K562 (cell line): ENCODE measurements at regions of chr13 and their contacts with region 1.

Region 1: GRCh38 chr13:45385907-45386553 is 32.1 kb downstream of the SLC25A30 start:
- DNase-seq: peak in 1 of 4 experiments; percentile 50
- ATAC-seq: peak; percentile 87
- H3K4me3 ChIP-seq: no peak overlapping the region
- H3K27ac ChIP-seq: peak overlapping the region; percentile 76; the same call in 2 of the 3 replicates
- H3K4me1 ChIP-seq: peaks cover 0 to 4% of the 10 kb centered on the region in 2 experiments; a peak in 2 of 5 replicates
- H3K27me3 ChIP-seq: no peaks in the 10 kb centered on the region
- CTCF ChIP-seq: no peak
- EP300 ChIP-seq: no peak
- POLR2A ChIP-seq: no peak
- RAD21 ChIP-seq: no peak

Region 2: GRCh38 chr13:45292176-45292575 is 93.9 kb before region 1 on chr13:
- CTCF ChIA-PET with region 1: no interaction called
- POLR2A ChIA-PET with region 1: no interaction called
- in situ Hi-C with region 1: no loop called
- intact Hi-C with region 1: no loop called
- DNase-seq: no peak
- ATAC-seq: no peak
- H3K4me3 ChIP-seq: no peak overlapping the region
- H3K27ac ChIP-seq: no peak overlapping the region
- H3K4me1 ChIP-seq: no peaks in the 10 kb centered on the region; a peak in 2 of 5 replicates
- H3K27me3 ChIP-seq: no peaks in the 10 kb centered on the region
- CTCF ChIP-seq: no peak
- EP300 ChIP-seq: no peak
- POLR2A ChIP-seq: no peak
- RAD21 ChIP-seq: no peak

Region 3: GRCh38 chr13:45592758-45593157 is 206.7 kb after region 1 on chr13:
- CTCF ChIA-PET with region 1: no interaction called
- POLR2A ChIA-PET with region 1: no interaction called
- in situ Hi-C with region 1: no loop called
- intact Hi-C with region 1: no loop called
- DNase-seq: no peak
- ATAC-seq: no peak
- H3K4me3 ChIP-seq: no peak overlapping the region
- H3K27ac ChIP-seq: no peak overlapping the region
- H3K4me1 ChIP-seq: no peaks in the 10 kb centered on the region; a peak in 1 of 5 replicates
- H3K27me3 ChIP-seq: peaks cover 0 to 7% of the 10 kb centered on the region in 2 experiments; a peak in 1 of 5 replicates
- CTCF ChIP-seq: no peak
- EP300 ChIP-seq: no peak
- POLR2A ChIP-seq: no peak
- RAD21 ChIP-seq: no peak

Region 4: DNA sequence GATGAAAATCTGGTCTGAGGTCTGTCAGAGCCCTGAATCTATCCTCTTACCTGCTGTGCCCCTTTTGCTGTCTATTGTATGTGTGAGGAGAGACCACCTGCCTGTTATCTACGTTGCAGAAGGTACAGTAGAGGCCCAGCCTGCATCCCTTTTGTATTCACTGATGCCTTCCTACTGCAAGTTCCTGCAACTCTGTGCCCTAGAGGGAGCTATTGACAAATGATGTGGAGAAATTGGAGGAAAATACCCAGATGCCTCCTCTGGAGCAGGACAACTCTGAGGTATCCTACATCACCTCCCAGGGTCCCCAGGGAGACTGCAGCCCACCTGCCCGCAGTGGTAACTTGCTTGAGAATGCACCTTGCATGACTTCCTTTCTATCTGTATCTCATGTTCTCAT is 431.8 kb after region 1 on chr13:
- CTCF ChIA-PET with region 1: no interaction called
- POLR2A ChIA-PET with region 1: no interaction called
- in situ Hi-C with region 1: no loop called
- intact Hi-C with region 1: no loop called
- DNase-seq: no peak
- ATAC-seq: no peak
- H3K4me3 ChIP-seq: no peak overlapping the region
- H3K27ac ChIP-seq: no peak overlapping the region
- H3K4me1 ChIP-seq: no peaks in the 10 kb centered on the region
- H3K27me3 ChIP-seq: peaks cover 0 to 20% of the 10 kb centered on the region in 2 experiments; a peak in 3 of 5 replicates
- CTCF ChIP-seq: peak in 1 of 3 experiments; percentile 13; a peak in 1 of 6 replicates
- EP300 ChIP-seq: no peak
- POLR2A ChIP-seq: no peak
- RAD21 ChIP-seq: no peak; a peak in 1 of 4 replicates

Region 5: DNA sequence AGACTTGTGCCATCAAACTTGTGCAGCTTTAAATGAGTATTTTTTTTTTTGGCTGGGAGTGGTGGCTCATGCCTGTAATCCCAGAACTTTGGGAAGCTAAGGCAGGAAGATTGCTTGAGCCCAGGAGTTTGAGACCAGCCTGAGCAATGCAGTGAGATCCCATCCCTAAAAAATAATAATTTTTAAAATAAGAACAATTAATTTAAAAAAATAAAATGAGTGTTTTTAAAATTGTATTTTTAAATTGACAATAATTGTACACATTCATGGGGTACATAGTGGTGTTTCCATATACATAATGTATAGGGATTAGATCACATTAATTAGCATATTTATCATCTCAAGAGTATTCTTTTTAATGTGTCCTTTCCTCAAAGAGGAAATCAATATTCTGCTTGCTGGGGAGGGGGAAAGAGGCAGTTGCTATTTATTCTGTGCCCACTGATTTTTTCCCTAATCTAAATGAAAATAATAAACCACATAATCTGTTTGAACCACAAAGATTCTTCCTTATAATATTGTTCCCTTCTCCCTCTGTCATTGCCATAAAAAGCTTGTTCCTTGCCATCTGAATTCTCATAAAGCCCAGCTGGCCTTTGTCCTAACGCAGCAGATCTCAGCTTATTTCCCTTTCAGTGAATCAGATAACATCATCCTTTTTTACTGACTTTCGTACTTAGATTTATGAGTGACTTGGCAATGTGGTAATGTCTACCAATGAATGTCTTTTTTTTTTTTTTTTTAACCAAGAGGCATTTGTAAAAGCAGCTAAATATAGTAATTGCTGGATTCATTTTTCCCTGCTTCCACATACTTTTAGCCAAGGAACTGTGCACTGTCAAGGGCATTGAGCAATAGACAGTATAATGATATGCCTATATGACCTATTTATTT is 1082.8 kb after region 1 on chr13:
- CTCF ChIA-PET with region 1: no interaction called
- POLR2A ChIA-PET with region 1: no interaction called
- in situ Hi-C with region 1: loop called (anchors 10 kb)
- intact Hi-C with region 1: no loop called
- DNase-seq: no peak
- ATAC-seq: no peak
- H3K4me3 ChIP-seq: no peak overlapping the region
- H3K27ac ChIP-seq: no peak overlapping the region
- H3K4me1 ChIP-seq: no peaks in the 10 kb centered on the region; a peak in 1 of 5 replicates
- H3K27me3 ChIP-seq: no peaks in the 10 kb centered on the region
- CTCF ChIP-seq: no peak
- EP300 ChIP-seq: no peak
- POLR2A ChIP-seq: no peak
- RAD21 ChIP-seq: no peak